ENCODE measurements at regions of chr21 and their contacts with region 1.

Region 1: GRCh38 chr21:36229181-36229580 is 72.6 kb downstream of the DOP1B start:
- DNase-seq: no peak
- ATAC-seq: no peak
- H3K4me3 ChIP-seq: no peak overlapping the region
- H3K27ac ChIP-seq: no peak overlapping the region
- H3K4me1 ChIP-seq: peaks cover 5% of the 10 kb centered on the region
- H3K27me3 ChIP-seq: no peaks in the 10 kb centered on the region
- CTCF ChIP-seq: no peak
- POLR2A ChIP-seq: no peak
- RAD21 ChIP-seq: no peak

Region 2: DNA sequence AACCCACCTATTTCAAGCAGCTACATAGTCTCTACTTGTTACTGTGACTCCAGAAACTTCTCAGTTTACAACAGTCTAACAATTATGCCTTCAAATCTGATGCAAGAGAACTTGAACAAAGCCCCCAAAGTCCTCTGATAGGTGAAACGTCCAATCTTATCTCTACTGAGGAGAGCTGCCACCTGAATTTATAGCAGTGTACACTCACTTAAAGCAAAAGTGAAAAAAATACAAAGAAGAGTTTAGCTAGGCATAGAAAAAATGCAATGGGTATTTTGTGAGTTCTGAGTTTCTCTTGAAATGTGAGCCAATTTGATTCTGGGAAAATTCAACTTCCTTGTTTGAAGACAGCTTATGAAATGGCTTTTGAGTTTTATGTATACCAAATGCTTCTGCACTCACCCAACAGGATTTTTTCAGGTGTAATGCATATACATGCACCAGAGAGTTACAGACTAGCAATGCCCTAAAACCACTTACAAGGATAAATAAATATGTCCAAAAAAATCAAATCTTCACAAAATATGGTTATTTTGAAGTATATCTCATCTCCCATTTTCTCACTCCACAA is 1578.2 kb before region 1 on chr21:
- CTCF ChIA-PET with region 1: interaction called, 11 read pairs
- POLR2A ChIA-PET with region 1: no interaction called
- dilution Hi-C with region 1: no loop called
- in situ Hi-C with region 1: no loop called
- intact Hi-C with region 1: no loop called
- DNase-seq: no peak
- ATAC-seq: no peak
- H3K4me3 ChIP-seq: no peak overlapping the region
- H3K27ac ChIP-seq: no peak overlapping the region
- H3K4me1 ChIP-seq: peaks cover 3% of the 10 kb centered on the region; the same call in 1 of the 2 replicates
- H3K27me3 ChIP-seq: peaks cover 36% of the 10 kb centered on the region
- CTCF ChIP-seq: no peak
- POLR2A ChIP-seq: no peak
- RAD21 ChIP-seq: no peak